HepG2 (cell line): ENCODE measurements at regions of chr9 and their contacts with region 1.

Region 1: DNA sequence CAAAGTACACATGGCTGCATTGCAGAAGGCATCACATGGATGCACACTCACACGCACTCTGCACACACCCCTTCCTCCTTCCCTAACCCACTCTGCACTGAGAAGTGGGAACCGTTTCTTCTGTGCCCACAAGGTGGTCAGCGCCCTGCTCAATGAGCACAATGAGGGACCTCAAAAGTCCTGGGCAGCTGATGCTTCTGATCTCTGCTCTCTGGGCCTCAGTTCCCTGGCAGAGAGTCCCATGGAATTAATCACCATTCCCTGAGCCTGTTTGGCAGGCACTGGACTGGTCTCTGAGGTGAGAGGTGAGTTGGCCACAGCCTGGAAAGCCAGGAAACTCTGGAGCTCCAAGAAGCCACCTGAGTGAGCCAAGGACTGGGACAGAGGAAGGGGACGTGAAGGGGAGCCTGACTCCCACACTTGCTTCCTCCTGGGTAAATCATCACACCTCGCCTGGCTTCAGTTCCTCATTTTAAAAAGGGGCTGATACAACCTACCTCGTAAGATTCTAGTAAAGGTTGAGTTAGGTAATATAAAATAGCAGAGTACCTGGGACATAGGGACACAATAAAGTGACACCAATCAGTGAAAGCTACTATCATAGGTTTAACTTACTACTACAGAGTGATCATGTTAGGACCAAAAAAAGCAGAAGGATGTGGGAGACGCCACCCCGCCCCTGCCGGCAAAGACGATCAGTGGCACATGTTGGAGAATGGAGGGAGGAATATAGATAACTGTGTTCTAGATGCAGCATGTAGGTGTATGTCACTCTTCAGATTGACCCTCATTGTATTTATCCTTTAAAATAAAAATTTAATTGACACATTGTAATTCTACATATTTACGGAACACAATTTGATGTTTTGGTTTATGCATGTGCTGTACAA is 21.1 kb upstream of the IGFBPL1 start:
- DNase-seq: no peak
- ATAC-seq: no peak
- H3K4me3 ChIP-seq: no peak overlapping the region
- H3K27ac ChIP-seq: no peak overlapping the region
- H3K4me1 ChIP-seq: peaks cover 35% of the 10 kb centered on the region
- H3K27me3 ChIP-seq: no peaks in the 10 kb centered on the region
- CTCF ChIP-seq: no peak
- EP300 ChIP-seq: no peak
- POLR2A ChIP-seq: no peak
- RAD21 ChIP-seq: no peak

Region 2: DNA sequence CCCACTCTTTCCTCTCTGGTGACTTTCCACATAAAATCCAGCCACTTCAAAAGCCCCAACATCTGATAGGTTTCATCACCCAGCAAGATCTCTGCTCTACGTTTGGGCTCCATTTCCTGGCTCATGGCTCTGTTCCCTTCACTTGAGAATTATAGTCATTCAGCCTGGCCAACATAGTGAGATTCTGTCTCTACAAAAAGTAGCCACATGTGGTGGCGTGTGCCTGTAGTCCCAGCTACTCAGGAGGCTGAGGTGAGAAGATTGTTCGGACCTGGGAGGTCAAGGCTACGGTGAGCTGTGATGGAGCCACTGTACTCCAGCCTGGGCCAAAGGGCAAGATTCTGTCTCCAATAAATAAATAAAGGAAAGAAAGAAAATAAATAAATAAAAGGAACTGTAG is 62.2 kb after region 1 on chr9:
- CTCF ChIA-PET with region 1: no interaction called
- POLR2A ChIA-PET with region 1: no interaction called
- in situ Hi-C with region 1: no loop called
- intact Hi-C with region 1: loop called (anchors 10 kb)
- DNase-seq: no peak
- ATAC-seq: no peak
- H3K4me3 ChIP-seq: no peak overlapping the region
- H3K27ac ChIP-seq: no peak overlapping the region
- H3K4me1 ChIP-seq: peaks cover 7% of the 10 kb centered on the region
- H3K27me3 ChIP-seq: no peaks in the 10 kb centered on the region
- CTCF ChIP-seq: no peak
- EP300 ChIP-seq: no peak
- POLR2A ChIP-seq: no peak
- RAD21 ChIP-seq: no peak